Ascending aorta (tissue), 2 donors: ENCODE measurements at regions of chr6 and their contacts with region 1.

Region 1: GRCh38 chr6:100479179-100480035 is 14.7 kb upstream of the SIM1 start:
- DNase-seq: no peak
- H3K4me3 ChIP-seq: no peak overlapping the region
- H3K27ac ChIP-seq: no peak overlapping the region
- H3K4me1 ChIP-seq: no peaks in the 10 kb centered on the region
- H3K27me3 ChIP-seq: no peaks in the 10 kb centered on the region
- CTCF ChIP-seq: peak; percentile 38 to 71 (median 57)

Region 2: DNA sequence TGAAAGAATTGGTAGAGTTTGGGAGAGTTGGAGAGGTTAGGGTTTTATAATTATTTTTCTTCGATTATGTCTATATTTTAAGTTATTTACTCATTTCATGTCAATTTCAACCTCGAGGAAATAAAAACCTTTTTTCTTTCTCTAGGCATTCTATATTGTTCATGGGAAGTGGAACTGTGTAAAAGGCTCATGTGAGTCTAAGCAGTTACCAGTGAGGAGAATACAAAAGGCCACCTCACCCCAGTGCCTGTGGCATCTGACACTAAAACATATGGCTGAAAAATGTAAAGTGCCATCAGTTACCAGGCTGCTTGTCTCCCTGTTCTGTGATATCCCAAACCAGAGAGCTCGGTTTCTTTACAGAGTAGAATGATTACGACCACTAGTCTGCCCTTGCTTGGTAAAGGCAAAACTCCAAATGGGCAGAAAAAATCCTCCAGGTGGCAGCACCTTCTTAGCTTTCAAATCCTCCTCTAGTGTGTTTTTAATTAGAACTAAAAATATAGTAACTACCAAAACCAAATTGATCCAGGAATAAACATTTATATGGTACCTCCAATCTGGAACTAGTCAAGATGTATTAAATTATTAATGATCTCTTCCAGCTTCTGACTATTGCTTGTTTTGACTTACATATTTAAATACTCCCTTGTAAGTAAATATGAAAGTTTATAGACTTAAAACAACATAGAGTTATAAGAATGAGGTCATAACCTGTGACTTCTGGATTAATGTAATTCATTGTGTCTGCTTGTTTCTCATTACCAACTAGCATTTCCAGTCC is 362.8 kb before region 1 on chr6:
- intact Hi-C with region 1: loop called (anchors 1 kb)
- DNase-seq: no peak
- H3K4me3 ChIP-seq: no peak overlapping the region
- H3K27ac ChIP-seq: no peak overlapping the region
- H3K4me1 ChIP-seq: no peaks in the 10 kb centered on the region
- H3K27me3 ChIP-seq: no peaks in the 10 kb centered on the region
- CTCF ChIP-seq: peak; percentile 23 to 65 (median 48)